Common myeloid progenitor, CD34-positive (primary cell): ENCODE measurements at regions of chr1 and their contacts with region 1.

Region 1: DNA sequence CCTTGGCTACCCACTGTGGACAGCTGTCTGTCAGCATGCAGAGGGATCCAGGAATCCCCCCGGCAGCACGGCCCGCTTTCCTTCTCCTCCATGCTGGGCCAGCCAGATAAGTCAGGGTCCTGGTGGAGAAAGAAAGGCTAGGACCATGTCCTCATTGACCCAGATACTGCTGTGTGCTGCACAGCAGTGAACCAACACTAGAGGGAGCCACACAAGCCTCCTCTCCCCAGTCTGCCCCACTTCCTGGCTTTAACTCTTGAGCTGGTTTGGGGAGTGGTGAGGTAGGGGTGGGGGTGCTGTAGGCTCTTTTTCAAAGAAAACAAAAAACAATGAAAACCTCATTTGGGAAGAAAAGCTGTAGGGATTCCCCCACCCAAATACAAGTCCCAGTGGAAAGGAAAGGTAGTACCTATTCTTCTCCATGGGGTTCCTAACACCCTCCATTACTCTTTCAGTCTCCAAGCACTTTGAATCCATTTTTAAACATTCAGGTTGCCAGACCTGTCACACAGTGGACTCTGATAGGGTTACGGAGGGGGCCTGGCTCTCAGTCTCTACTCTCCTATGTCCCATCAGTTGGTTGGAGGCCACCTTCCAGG is 84.9 kb upstream of the CD1D start:
- DNase-seq: peak; percentile 38 to 61 (median 46)
- H3K4me3 ChIP-seq: no peak overlapping the region
- H3K27ac ChIP-seq: no peak overlapping the region
- H3K4me1 ChIP-seq: no peaks in the 10 kb centered on the region
- H3K27me3 ChIP-seq: no peaks in the 10 kb centered on the region

Region 2: GRCh38 chr1:157963713-157964112 is 132.1 kb before region 1 on chr1:
- CTCF ChIA-PET with region 1: interaction called, 10 read pairs
- POLR2A ChIA-PET with region 1: interaction called, 3 read pairs
- DNase-seq: peak; percentile 50 to 76 (median 64)
- H3K4me3 ChIP-seq: no peak overlapping the region
- H3K27ac ChIP-seq: no peak overlapping the region
- H3K4me1 ChIP-seq: peaks cover 0 to 5% (median 2%) of the 10 kb centered on the region in 4 experiments
- H3K27me3 ChIP-seq: peaks cover 0 to 3% (median 0%) of the 10 kb centered on the region in 5 experiments

Region 3: GRCh38 chr1:158117854-158118704 is 22.2 kb after region 1 on chr1:
- CTCF ChIA-PET with region 1: interaction called, 132 read pairs
- POLR2A ChIA-PET with region 1: no interaction called
- DNase-seq: peak; percentile 76 to 83 (median 82)
- H3K4me3 ChIP-seq: peak overlapping the region in 6 of 7 experiments; percentile 10 to 63 (median 26)
- H3K27ac ChIP-seq: no peak overlapping the region
- H3K4me1 ChIP-seq: peaks cover 0 to 16% (median 11%) of the 10 kb centered on the region in 4 experiments
- H3K27me3 ChIP-seq: peaks cover 0 to 31% (median 10%) of the 10 kb centered on the region in 5 experiments

Region 4: DNA sequence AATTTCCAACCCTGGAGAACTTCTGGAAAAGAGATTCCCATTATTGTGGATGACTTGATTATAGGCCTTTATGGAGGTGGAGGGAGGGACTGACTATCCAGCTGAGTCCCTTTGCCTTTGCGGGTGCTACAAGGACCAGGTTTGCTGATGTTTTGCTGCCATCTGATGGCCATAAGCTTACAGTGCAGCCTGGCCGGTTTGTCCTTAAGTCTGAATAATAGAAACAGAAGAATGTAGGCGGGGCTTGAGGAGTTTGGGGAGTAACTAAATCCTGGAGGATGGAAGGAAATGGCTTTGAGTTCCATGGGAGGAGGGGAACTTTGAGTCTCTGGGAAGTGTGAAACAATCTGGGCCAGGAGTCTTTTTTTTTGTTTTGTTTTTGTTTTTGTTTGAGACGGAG is 29.2 kb after region 1 on chr1:
- CTCF ChIA-PET with region 1: interaction called, 132 read pairs
- POLR2A ChIA-PET with region 1: no interaction called
- DNase-seq: peak; percentile 87 to 93 (median 90)
- H3K4me3 ChIP-seq: no peak overlapping the region
- H3K27ac ChIP-seq: no peak overlapping the region
- H3K4me1 ChIP-seq: peaks cover 0 to 6% (median 4%) of the 10 kb centered on the region in 4 experiments
- H3K27me3 ChIP-seq: peaks cover 0 to 11% (median 4%) of the 10 kb centered on the region in 5 experiments

Region 5: DNA sequence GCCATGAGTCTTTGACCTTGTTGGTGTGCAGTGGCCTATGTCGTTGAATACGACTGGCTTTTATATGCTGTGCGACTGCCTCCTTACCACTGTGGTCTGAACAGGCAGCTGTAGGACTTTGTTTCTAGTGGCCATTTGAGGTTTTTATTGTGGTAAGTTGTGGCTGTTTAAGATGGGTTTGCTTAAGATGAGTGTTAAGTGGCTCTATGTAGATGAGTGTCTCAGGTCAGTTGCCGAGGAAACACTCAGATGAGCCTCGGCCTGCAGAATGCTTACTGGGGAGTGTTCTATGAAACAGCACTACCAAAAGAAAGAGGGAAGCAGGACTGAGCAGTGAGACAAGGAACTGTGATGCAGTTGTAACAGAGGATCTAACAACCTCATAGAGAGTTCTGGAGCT is 179.0 kb after region 1 on chr1:
- CTCF ChIA-PET with region 1: no interaction called
- POLR2A ChIA-PET with region 1: no interaction called
- DNase-seq: no peak
- H3K4me3 ChIP-seq: no peak overlapping the region
- H3K27ac ChIP-seq: no peak overlapping the region
- H3K4me1 ChIP-seq: peaks cover 3 to 10% (median 4%) of the 10 kb centered on the region in 4 experiments
- H3K27me3 ChIP-seq: peaks cover 0 to 21% (median 5%) of the 10 kb centered on the region in 5 experiments